PC-3 (cell line): ENCODE measurements at regions of chr1 and their contacts with region 1.

Region 1: DNA sequence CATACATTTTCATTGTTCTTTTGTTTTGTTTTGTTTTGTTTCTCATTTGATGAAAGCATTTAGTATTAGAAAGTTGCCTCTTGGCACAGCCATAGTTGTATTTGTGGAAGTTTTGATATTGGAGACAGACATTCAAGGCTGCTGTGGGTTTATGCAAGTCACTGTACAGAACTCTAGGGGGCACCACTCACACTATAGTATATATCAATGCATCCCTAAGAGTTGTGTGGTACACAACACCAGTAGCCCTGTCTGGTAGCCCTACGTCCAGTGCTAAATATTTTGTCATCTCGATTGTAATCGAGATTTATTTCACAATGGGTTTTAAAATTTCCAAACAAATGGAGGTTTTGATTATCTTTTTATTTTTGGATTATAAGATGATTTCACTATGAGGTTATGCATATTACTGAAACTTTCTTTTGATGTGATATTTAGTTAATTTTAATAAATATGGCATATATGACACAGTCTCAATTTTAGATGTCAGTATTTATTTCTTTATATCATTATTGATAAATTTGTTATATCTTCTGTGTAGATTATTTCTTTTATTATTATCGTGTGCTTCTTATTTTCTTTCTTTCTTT is 112.2 kb downstream of the NR5A2 start:
- DNase-seq: peak; percentile 93
- ATAC-seq: peak; percentile 100
- H3K4me3 ChIP-seq: no peak overlapping the region
- H3K27ac ChIP-seq: no peak overlapping the region
- H3K4me1 ChIP-seq: no peaks in the 10 kb centered on the region
- H3K27me3 ChIP-seq: no peaks in the 10 kb centered on the region
- CTCF ChIP-seq: peak; percentile 100

Region 2: DNA sequence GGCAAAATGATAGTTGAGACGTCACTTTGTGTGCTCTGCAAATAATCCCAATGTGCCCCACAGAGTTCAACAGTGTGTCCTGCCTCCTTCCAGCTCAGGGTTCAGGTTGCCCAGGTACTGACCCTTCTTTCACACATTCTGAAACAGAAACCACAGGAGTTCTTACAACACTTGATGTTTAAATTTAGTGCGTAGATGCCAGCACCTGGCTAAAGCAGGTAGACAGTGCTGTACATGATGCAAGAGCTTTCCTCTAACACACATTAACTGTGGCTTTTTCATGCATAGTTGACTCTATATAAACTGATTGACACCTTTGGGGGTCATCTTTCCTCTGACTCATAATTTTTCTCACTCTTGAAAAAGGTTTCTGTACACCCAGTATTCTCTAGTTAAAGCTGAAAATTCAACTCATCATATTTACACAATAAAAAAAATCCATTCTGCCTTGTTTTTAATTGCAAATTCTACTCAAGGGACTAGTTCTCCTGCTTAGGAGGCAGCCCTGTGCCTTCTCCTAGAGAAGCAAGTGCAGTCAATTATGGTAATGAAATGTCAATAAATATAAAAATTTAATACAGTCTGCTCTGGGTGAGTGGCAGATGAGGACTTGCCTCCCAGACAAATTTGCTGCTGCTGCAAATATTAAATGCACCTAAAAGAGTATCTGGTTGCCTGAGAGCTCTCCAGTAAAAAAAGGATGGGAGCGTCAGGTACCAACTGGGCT is 20.8 kb before region 1 on chr1:
- CTCF ChIA-PET with region 1: no interaction called
- POLR2A ChIA-PET with region 1: no interaction called
- intact Hi-C with region 1: no loop called
- DNase-seq: no peak
- ATAC-seq: peak; percentile 59
- H3K4me3 ChIP-seq: no peak overlapping the region
- H3K27ac ChIP-seq: no peak overlapping the region
- H3K4me1 ChIP-seq: no peaks in the 10 kb centered on the region
- H3K27me3 ChIP-seq: no peaks in the 10 kb centered on the region
- CTCF ChIP-seq: no peak

Region 3: DNA sequence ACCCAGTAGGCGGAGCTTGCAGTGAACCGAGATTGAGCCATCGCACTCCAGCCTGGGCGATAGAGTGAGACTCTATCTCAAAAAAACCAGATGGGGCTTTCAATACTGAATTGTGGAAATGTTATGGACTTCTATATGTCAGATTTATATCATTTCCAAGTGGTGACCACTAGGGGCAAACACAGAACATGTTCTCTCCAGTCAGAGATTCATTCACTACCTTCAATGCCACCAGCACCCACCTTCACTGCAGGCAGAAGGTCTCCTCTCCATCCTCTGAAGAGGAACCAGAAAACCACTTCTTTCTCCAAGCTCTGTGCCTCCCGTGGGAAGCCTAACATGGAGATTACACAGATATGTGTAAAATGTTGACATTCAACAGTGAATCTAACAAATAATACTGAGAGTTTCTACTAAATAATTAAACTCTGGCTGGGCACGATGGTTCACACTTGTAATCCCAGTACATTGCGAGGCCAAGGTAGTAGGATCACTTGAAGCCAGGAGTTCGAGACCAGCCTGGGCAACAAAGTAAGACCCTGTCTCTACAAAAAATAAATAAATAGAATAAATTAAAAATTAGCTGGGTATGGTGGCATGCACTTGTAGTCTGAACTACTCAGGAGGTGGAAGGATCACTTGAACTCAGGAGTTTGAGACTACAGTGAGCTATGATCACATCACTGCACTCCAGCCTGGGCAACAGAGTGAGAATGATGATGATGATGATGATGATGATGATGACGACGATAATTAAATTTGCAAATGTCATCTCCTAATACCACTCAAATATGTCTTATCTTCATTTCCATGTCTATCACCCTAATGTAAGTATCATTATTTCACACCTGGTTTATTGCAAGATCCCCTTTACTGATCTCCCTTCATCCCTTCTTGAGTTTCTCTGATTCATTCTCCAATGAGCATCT is 119.0 kb after region 1 on chr1:
- CTCF ChIA-PET with region 1: no interaction called
- POLR2A ChIA-PET with region 1: no interaction called
- intact Hi-C with region 1: loop called (anchors 5 kb)
- DNase-seq: peak; percentile 82
- ATAC-seq: peak; percentile 99
- H3K4me3 ChIP-seq: no peak overlapping the region
- H3K27ac ChIP-seq: no peak overlapping the region
- H3K4me1 ChIP-seq: no peaks in the 10 kb centered on the region
- H3K27me3 ChIP-seq: no peaks in the 10 kb centered on the region
- CTCF ChIP-seq: peak; percentile 90